H1 (cell line): ENCODE measurements at regions of chr6 and their contacts with region 1.

Region 1: DNA sequence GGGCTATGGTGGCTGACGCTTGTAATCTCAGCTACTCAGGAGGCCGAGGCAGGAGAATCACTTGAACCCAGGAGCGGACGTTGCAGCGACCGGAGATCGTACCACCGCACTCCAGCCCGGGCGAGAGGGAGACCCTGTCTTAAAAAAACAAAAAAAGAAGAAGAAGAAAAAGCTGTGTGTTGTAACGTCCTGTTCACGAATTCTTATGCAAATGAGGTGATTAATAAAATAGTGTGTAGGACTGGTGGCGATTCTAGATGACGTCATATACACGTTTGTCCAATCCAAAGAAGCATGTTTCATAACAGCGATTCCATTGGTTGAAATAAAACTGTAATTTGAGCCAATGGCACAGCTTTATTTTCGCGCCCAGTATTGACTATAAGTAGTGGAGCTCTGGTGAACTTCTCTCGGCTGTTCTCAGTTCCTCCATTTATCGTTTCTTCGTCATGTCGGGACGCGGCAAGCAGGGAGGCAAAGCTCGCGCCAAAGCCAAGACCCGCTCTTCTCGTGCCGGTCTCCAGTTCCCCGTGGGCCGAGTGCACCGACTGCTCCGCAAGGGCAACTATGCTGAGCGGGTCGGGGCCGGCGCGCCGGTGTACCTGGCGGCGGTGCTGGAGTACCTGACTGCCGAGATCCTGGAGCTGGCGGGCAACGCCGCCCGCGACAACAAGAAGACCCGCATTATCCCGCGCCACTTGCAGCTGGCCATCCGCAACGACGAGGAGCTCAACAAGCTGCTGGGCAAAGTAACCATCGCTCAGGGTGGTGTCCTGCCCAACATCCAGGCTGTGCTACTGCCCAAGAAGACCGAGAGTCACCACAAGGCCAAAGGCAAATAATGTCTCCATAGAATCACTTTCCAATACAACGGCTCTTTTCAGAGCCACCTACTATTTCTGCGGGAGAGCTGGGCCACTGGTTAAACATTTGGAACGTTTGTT is 47.0 kb downstream of the OR2B2 start:
- DNase-seq: peak in 1 of 2 experiments; percentile 86
- H3K4me3 ChIP-seq: peak overlapping the region; percentile 61 to 86 (median 79)
- H3K27ac ChIP-seq: peak overlapping the region; percentile 90
- H3K4me1 ChIP-seq: peaks cover 0 to 5% (median 1%) of the 10 kb centered on the region in 4 experiments; a peak in 2 of 7 replicates
- H3K27me3 ChIP-seq: no peaks in the 10 kb centered on the region
- CTCF ChIP-seq: no peak
- EP300 ChIP-seq: no peak
- POLR2A ChIP-seq: peak; percentile 93 to 97
- RAD21 ChIP-seq: no peak; a peak in 1 of 4 replicates

Region 2: DNA sequence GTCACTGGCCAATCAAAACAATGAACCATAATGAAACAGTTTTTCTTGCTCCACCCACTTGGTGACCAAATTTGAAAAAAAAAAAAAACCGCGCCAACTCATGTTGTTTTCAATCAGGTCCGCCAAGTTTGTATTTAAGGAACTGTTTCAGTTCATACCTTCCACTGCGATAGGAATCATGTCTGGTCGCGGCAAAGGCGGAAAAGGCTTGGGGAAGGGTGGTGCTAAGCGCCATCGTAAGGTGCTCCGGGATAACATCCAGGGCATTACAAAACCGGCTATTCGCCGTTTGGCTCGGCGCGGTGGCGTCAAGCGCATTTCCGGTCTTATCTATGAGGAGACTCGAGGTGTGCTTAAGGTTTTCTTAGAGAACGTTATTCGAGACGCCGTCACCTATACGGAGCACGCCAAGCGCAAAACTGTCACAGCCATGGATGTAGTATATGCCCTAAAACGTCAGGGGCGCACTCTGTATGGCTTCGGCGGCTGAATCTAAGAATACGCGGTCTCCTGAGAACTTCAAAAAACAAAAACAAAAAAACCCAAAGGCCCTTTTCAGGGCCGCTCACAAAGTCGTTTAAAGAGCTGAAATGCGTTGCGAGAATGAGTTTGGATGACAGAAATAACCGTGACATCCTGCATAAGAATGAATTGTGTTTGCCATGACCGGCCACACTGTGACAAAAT is 1761.3 kb before region 1 on chr6:
- CTCF ChIA-PET with region 1: no interaction called
- POLR2A ChIA-PET with region 1: interaction called, 13 read pairs
- DNase-seq: peak; percentile 80 to 83
- H3K4me3 ChIP-seq: peak overlapping the region; percentile 41 to 63 (median 52)
- H3K27ac ChIP-seq: peak overlapping the region; percentile 92
- H3K4me1 ChIP-seq: peaks cover 0 to 3% (median 0%) of the 10 kb centered on the region in 4 experiments; a peak in 2 of 7 replicates
- H3K27me3 ChIP-seq: no peaks in the 10 kb centered on the region
- CTCF ChIP-seq: peak in 2 of 3 experiments; percentile 26 to 37; a peak in 3 of 4 replicates
- EP300 ChIP-seq: peak in 1 of 2 experiments; percentile 96; a peak in 1 of 3 replicates
- POLR2A ChIP-seq: peak; percentile 98 to 99
- RAD21 ChIP-seq: no peak; a peak in 1 of 4 replicates

Region 3: DNA sequence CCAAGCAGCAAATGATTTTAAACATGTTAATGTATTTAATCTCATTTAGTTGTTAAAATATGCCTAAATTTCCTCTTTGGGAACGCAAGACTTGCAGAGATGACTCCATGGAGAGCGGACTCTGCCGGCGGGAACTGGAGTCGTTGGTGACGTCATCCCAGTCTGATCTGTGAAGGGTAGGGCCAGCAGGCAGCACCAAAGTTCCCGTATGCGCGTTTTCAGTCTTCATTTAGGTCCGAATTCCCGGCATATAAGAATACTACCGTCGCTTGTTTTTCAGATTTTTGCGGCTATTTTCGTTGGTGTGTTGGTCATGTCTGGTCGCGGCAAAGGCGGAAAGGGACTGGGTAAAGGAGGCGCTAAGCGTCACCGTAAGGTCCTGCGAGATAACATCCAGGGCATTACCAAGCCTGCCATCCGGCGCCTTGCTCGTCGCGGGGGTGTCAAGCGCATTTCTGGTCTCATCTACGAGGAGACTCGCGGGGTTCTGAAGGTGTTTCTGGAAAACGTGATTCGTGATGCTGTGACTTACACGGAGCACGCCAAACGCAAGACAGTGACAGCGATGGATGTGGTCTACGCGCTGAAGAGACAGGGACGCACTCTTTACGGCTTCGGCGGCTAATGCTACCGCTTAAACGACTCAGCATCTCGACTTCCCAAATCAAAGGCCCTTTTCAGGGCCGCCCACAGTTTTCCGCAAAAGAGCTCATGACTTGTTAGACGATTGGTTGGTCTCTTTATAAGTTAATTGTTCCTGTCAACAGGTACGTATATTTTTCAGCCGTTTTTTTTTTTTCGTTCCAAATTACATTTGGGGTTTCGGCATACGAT is 1660.6 kb before region 1 on chr6:
- CTCF ChIA-PET with region 1: no interaction called
- POLR2A ChIA-PET with region 1: interaction called, 163 read pairs
- DNase-seq: peak; percentile 88 to 97
- H3K4me3 ChIP-seq: peak overlapping the region; percentile 64 to 94 (median 82)
- H3K27ac ChIP-seq: peak overlapping the region; percentile 98
- H3K4me1 ChIP-seq: peaks cover 0 to 15% (median 5%) of the 10 kb centered on the region in 4 experiments; a peak in 6 of 7 replicates
- H3K27me3 ChIP-seq: no peaks in the 10 kb centered on the region
- CTCF ChIP-seq: peak in 1 of 3 experiments; percentile 18; a peak in 1 of 4 replicates
- EP300 ChIP-seq: peak; percentile 13 to 95; a peak in 2 of 3 replicates
- POLR2A ChIP-seq: peak; percentile 99 to 100
- RAD21 ChIP-seq: 0 out of 4 replicates have a peak, but pooled peaks of 1 of the 2 experiments have one; percentile 14

Region 4: GRCh38 chr6:26234421-26235296 is 1630.5 kb before region 1 on chr6:
- CTCF ChIA-PET with region 1: no interaction called
- POLR2A ChIA-PET with region 1: interaction called, 61 read pairs
- DNase-seq: peak in 1 of 2 experiments; percentile 85
- H3K4me3 ChIP-seq: peak overlapping the region; percentile 83 to 91 (median 88)
- H3K27ac ChIP-seq: peak overlapping the region; percentile 93
- H3K4me1 ChIP-seq: peaks cover 0 to 3% (median 0%) of the 10 kb centered on the region in 4 experiments; a peak in 3 of 7 replicates
- H3K27me3 ChIP-seq: no peaks in the 10 kb centered on the region
- CTCF ChIP-seq: no peak
- EP300 ChIP-seq: no peak
- POLR2A ChIP-seq: peak; percentile 86
- RAD21 ChIP-seq: no peak

Region 5: DNA sequence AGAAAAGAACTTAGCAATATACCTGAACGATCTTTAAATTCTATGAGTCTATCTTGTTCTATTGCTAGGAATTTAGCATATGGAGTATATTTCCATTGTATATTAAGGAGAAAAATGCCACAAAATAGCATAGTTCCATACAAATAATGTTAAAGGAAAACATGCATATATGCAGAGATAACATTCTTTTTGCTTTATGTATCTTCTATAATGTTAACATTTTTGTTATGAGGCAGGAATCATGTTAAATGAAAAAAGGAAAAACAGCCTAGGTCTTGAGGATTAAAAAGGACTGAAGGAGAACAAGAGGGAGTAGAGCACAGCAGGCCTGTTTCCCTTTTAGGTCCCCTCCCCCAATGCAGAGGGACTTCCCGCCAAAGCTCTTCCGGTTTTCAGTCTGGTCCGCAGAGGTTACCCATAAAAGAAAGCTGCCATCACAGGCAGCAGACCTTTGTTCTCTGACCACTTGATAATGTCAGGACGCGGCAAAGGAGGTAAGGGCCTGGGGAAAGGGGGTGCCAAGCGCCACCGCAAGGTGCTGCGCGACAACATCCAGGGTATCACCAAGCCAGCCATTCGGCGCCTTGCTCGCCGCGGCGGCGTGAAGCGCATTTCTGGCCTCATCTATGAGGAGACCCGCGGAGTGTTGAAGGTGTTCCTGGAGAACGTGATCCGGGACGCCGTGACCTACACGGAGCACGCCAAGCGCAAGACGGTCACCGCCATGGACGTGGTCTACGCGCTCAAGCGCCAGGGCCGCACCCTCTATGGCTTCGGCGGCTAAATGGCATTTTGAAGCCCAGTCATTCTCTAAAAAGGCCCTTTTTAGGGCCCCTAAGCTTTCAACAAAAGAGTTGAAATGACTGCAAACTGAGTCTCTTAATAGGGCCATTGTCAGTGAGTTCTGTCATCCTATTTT is 726.1 kb before region 1 on chr6:
- CTCF ChIA-PET with region 1: no interaction called
- POLR2A ChIA-PET with region 1: interaction called, 211 read pairs
- DNase-seq: peak; percentile 91 to 92
- H3K4me3 ChIP-seq: peak overlapping the region; percentile 50 to 95 (median 70)
- H3K27ac ChIP-seq: peak overlapping the region; percentile 95
- H3K4me1 ChIP-seq: peaks cover 0 to 10% (median 4%) of the 10 kb centered on the region in 4 experiments; a peak in 5 of 7 replicates
- H3K27me3 ChIP-seq: no peaks in the 10 kb centered on the region
- CTCF ChIP-seq: no peak
- EP300 ChIP-seq: peak; percentile 40 to 99
- POLR2A ChIP-seq: peak; percentile 91 to 99
- RAD21 ChIP-seq: no peak

Region 6: GRCh38 chr6:27838058-27838944 is 26.9 kb before region 1 on chr6:
- CTCF ChIA-PET with region 1: interaction called, 8 read pairs
- POLR2A ChIA-PET with region 1: interaction called, 2,035 read pairs
- DNase-seq: peak; percentile 76 to 87
- H3K4me3 ChIP-seq: peak overlapping the region; percentile 77 to 96 (median 93)
- H3K27ac ChIP-seq: peak overlapping the region; percentile 98
- H3K4me1 ChIP-seq: peaks cover 0 to 5% (median 2%) of the 10 kb centered on the region in 4 experiments; a peak in 1 of 7 replicates
- H3K27me3 ChIP-seq: no peaks in the 10 kb centered on the region
- CTCF ChIP-seq: no peak
- EP300 ChIP-seq: no peak
- POLR2A ChIP-seq: peak; percentile 88 to 91
- RAD21 ChIP-seq: no peak